ENCODE measurements at regions of chr7 and their contacts with region 1.

Region 1: GRCh38 chr7:149140831-149141230 is 6.4 kb upstream of the ZNF398 start:
- DNase-seq: no peak
- CTCF ChIP-seq: no peak

Region 2: DNA sequence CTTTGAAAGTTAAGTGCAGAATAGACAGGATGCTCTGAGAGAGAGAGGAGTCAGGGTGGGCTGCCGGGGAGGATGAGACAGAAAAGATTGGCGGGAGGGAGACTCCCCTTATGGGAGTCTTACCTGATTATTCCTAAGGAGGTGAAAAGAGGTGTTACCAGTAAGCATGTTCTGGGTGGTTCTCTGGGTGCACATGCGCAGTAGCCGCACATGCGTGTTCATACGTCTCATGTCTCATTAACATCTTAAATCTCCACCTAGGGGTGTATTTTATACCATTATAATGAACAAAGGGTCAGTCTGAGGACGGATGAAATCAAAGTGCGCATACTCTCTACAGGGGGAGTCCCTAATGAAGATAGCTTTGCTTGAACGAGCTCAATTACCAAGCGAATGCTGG is 1143.2 kb before region 1 on chr7:
- CTCF ChIA-PET with region 1: no interaction called
- POLR2A ChIA-PET with region 1: interaction called, 13 read pairs
- DNase-seq: no peak
- CTCF ChIP-seq: no peak

Measured in GM10248 (cell line).